GM10248 (cell line): ENCODE measurements at regions of chr17 and their contacts with region 1.

Region 1: DNA sequence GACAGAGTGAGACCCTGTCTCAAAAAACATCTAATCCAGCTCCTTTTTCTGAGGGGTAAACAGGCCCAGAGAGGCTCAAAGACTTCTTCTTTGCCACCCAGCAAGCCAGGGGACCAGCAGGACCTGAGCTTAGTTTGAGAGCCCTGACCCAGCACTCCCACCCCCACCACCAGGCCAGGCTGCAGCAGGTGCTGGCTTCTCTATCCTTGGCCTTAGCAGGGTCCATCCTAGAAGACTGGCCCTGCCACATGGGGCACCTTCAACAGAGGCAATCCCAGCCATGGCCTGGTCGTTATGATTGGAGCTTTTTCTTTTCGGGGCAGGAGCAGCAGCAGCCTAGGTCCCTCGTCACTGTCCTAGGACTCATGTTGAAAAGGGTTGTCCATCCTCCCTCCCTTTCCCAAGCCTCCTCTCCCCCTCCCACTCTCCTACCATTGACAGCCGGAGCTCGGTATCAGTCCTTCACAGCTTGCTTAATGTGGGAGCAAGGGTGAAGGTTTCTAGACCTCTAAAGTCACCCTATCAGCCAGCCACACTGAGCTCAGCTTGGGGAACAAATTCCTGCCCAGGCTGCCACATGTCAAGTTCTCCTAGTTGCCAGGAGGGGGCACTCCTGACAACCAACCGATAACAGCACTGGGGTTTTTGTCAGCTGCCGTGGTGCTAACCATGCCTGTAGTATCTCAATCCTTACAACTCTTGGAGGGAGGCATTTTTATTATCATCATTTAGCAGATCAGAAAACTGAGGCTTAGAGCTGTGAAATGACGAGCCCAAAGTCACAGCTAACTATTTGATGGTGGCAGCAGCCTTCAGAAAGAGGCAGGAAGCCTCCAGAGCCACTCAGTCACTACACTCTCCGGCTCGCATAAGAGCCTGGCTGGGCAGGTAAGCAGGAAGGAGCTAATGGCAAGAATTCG is 11.2 kb downstream of the MRPL27 start:
- DNase-seq: peak; percentile 85
- CTCF ChIP-seq: peak; percentile 66

Region 2: GRCh38 chr17:50318501-50319285 is 43.1 kb before region 1 on chr17:
- CTCF ChIA-PET with region 1: interaction called, 13 read pairs
- POLR2A ChIA-PET with region 1: no interaction called
- DNase-seq: no peak
- CTCF ChIP-seq: no peak

Region 3: DNA sequence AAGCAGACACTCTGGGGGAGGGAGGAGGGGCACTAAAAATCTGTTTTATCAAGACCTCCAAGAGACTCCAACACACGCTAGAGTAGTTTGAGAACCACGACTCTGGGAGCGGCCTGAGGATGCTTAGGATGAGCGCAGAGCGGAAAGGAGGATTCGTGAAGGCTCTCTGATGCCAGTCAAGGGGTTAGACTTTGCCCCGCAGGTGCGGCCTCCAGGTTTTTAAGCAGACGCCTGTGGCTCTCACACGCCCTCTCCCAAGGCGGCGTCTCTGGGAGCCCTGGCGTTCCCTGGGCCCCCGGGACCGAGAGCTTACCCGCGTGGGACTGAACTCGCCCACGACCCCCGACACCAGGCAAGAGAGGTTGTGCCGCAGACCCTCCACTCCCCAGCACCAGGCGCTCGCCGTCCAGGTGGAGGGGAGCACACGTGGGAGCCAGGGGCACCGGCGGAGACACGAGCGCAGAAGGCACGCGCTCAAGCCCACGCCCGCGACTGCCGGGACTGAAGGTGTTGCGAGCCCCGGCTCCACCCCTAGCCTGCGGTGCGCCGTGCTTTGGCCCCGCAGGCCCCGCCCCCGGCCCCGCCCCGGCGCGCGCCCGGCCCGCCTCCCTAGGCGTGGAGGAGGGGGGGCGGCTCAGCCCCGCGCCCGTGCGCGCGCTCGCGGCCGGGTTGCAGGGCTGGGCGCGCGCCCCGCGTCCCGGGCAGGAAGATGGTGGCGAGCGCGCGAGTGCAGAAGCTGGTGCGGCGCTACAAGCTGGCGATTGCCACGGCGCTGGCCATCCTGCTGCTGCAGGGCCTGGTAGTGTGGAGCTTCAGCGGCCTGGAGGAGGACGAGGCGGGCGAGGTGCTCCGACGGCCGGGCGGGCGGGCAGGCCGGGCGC is 16.1 kb before region 1 on chr17 and contains the start of gene XYLT2:
- CTCF ChIA-PET with region 1: interaction called, 42 read pairs
- POLR2A ChIA-PET with region 1: no interaction called
- DNase-seq: peak; percentile 99
- CTCF ChIP-seq: no peak

Region 4: DNA sequence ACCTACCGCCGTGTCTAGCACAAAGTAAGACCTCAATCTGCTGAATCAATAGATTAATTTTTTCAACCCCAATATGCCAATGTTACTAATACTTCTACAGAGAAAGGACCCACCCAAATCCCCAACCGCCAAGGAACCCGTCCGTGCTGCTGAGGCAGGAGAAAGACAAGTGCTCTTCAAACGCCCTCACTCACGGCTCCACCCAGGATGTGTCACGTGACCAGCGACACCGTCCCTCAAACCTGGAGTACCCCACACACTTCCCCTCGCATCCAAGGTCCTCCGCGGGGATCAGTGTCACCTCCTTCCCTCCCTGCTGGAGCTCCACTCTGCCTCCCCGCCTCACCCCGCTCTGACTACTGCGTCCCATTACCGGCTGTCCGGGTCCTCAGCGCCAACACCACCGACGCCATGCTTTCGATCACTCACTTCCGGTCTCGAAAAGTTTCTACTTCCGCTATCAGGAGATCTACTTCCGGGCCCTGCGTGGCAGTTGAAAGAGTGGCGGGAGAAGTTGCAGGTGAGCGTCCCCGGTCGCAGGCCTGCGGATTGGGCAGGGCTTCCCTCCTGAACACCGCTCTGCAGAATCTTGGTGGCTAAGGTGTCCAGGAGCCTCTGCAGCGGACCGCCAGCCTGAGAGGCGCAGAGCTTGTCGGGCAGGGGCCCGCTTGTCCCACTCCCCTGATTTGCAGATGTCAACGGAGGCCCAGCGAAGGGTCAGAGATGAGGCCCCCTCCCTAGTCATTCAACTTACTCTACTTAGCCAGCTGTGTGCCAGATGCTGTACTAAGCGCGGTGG is 11.1 kb after region 1 on chr17 and contains the starts of genes EME1 and MRPL27:
- CTCF ChIA-PET with region 1: interaction called, 66 read pairs
- POLR2A ChIA-PET with region 1: interaction called, 8 read pairs
- DNase-seq: peak; percentile 92
- CTCF ChIP-seq: no peak

Region 5: GRCh38 chr17:50380369-50381259 is 18.8 kb after region 1 on chr17:
- CTCF ChIA-PET with region 1: interaction called, 66 read pairs
- POLR2A ChIA-PET with region 1: interaction called, 3 read pairs
- DNase-seq: no peak
- CTCF ChIP-seq: peak; percentile 18

Region 6: GRCh38 chr17:50613007-50613992 is 251.5 kb after region 1 on chr17:
- CTCF ChIA-PET with region 1: no interaction called
- POLR2A ChIA-PET with region 1: no interaction called
- DNase-seq: no peak
- CTCF ChIP-seq: no peak